ENCODE measurements at regions of chr9 and their contacts with region 1.

Region 1: GRCh38 chr9:113657703-113658544 is 194.4 kb downstream of the RGS3 start:
- DNase-seq: peak; percentile 86
- ATAC-seq: peak; percentile 92
- H3K4me3 Mint-ChIP-seq: no peak overlapping the region
- H3K27ac Mint-ChIP-seq: no peak overlapping the region
- H3K4me1 Mint-ChIP-seq: peaks cover 13% of the 10 kb centered on the region
- H3K27me3 Mint-ChIP-seq: peaks cover 25% of the 10 kb centered on the region

Region 2: DNA sequence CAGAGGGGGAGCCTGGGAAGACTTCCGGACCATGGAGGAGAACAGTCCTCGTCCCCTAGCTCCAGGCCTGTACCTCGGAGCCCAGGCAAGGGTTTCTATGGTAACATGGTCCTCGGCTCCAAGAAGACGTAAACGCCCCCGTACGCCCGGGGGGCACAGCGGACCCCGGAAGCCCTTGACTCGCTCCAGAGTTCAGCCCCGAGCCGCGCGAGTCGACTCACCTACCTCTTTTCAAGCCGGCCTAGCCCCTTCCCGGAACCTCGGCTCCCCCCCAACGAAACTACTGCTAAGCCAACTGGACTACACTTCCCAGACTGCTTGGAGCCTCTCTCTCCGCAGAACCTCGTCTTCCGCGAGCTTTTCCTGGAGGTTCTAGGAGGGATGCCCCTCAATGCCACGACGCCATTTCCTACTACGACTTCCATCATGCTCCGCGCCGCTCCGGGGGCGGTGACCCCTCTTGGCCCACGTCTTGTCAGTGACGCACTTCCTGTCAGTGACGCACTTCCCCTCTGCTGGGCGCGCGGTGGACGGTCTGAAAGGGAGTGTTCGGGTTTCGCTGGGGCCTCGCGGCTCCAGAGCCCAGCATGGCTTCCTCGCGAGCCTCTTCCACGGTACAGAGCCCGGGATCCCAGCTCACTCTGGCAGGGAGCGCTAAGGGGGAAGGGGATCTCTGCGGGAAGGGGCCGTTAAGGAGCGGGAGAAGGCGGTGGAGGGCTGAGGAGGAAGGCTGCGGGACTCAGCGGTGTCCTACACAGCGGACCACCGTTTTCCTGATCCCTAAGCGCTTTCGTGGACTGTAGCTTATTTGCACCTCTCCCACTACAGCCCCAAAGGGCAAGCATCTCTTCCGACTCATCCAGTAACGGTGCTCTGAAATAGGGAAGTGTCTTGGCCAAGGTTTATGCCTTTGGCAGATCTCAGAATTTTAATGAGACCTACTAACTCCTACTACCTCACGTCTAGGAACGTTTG is 382.5 kb before region 1 on chr9 and contains the starts of genes CDC26 and PRPF4:
- CTCF ChIA-PET with region 1: interaction called, 30 read pairs
- DNase-seq: peak; percentile 98
- ATAC-seq: peak; percentile 96
- H3K4me3 Mint-ChIP-seq: no peak within 1 kb of the TSS
- H3K27ac Mint-ChIP-seq: no peak within 1 kb of the TSS
- H3K4me1 Mint-ChIP-seq: peaks cover 32% of the 10 kb centered on the region
- H3K27me3 Mint-ChIP-seq: no peaks in the 10 kb centered on the region
- total RNA-seq, gene CDC26: 25.6 to 33.6 TPM
- total RNA-seq, gene PRPF4: 34.0 to 43.4 TPM

Region 3: DNA sequence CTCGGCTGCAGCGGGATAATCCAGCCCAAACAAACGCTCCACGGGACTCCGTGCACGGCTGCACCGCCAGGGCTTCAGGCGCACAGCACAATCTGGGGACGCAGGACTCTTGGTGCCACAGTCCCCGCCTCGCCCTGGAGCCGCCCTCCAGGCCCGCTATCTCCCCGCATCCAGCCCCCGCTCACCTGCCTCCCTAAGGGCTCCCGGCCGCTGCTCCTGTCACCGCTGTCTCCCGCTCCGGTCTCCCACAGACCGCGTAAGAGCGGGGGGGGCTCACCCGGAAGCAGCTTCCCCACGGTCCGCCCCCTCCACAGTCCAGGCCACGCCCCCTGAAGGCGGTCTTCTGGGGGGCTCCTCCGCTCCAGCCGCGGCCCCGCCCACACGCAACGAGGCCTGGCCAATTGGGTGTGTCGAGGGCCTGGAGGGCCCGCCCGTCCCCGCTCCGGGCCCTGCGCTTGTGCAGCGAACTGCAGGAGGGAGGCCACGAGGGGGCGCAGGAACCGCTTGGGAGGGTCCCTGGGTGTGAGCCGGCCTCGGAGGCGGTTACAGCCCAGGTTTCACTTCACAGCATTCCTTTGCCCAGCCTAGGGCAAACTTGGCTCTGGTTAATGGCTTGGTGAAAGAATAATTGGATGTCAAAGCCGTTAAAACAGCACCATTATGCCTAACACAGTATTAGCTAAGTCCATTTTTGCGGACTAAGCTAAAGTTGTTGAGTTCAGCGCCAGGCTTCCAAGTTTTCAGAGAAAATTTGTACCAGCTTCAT is 256.7 kb before region 1 on chr9 and contains the start of gene ALAD:
- CTCF ChIA-PET with region 1: interaction called, 26 read pairs
- DNase-seq: peak; percentile 99
- ATAC-seq: peak; percentile 100
- H3K4me3 Mint-ChIP-seq: peak within 1 kb of the TSS; percentile 91
- H3K27ac Mint-ChIP-seq: peak within 1 kb of the TSS; percentile 86
- H3K4me1 Mint-ChIP-seq: peaks cover 21% of the 10 kb centered on the region
- H3K27me3 Mint-ChIP-seq: no peaks in the 10 kb centered on the region
- total RNA-seq, gene ALAD: 27.5 to 29.0 TPM

Region 4: GRCh38 chr9:113446323-113446740 is 211.6 kb before region 1 on chr9:
- CTCF ChIA-PET with region 1: interaction called, 151 read pairs
- DNase-seq: no peak
- ATAC-seq: no peak
- H3K4me3 Mint-ChIP-seq: no peak overlapping the region
- H3K27ac Mint-ChIP-seq: no peak overlapping the region
- H3K4me1 Mint-ChIP-seq: peaks cover 2% of the 10 kb centered on the region
- H3K27me3 Mint-ChIP-seq: no peaks in the 10 kb centered on the region

Region 5: GRCh38 chr9:113523421-113524236 is 134.3 kb before region 1 on chr9:
- CTCF ChIA-PET with region 1: interaction called, 14 read pairs
- DNase-seq: peak; percentile 74
- ATAC-seq: peak; percentile 47
- H3K4me3 Mint-ChIP-seq: peak overlapping the region; percentile 38
- H3K27ac Mint-ChIP-seq: peak overlapping the region; percentile 65
- H3K4me1 Mint-ChIP-seq: peaks cover 66% of the 10 kb centered on the region
- H3K27me3 Mint-ChIP-seq: no peaks in the 10 kb centered on the region

Region 6: DNA sequence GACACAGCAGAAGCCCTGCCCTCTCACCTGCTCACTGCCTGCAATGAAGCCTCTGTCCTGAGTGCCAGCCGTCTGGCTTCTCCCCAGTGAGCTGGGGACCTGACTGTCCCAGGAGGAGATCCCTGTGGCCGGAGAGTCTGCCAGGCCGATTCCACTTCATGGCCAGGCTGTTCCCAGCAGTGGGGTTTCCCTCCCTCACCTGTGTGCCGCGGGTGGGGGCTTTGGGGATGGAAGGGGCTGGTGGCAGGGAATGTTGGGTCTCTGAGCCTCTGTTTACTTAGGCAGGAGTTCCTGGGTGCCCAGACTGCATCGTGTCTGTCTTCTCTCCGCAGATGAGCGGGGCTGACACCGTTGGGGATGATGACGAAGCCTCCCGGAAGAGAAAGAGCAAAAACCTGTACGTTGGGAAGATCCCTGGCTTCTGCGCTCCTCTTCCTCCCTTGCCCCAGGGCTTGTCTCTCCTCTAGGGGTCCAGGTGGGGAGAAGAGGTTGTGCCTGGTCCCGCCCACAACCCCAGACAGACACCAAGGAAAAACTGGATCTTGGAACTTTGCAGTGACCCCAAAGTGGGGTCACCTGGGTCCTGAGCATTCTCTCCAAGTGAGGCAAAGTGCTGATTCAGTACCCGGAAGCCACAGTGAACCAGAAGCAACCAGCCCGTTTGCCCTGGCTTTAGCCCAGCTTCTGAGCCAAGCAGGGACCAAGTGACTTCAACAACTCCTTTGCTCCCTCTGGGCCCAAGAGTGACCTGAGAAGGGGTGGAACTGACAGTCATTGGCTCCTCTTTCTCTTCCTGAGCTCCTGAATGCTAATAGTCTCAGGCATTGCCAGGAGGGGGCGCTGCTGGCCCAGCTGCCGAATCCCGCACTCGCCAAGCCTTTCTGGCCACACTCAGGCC is 66.7 kb before region 1 on chr9:
- CTCF ChIA-PET with region 1: interaction called, 230 read pairs
- DNase-seq: peak; percentile 68
- ATAC-seq: peak; percentile 56
- H3K4me3 Mint-ChIP-seq: no peak overlapping the region
- H3K27ac Mint-ChIP-seq: peak overlapping the region; percentile 2
- H3K4me1 Mint-ChIP-seq: peaks cover 34% of the 10 kb centered on the region
- H3K27me3 Mint-ChIP-seq: no peaks in the 10 kb centered on the region

Region 7: GRCh38 chr9:113957821-113958341 is 300.0 kb after region 1 on chr9:
- CTCF ChIA-PET with region 1: no interaction called
- DNase-seq: no peak
- ATAC-seq: no peak
- H3K4me3 Mint-ChIP-seq: no peak overlapping the region
- H3K27ac Mint-ChIP-seq: no peak overlapping the region
- H3K4me1 Mint-ChIP-seq: no peaks in the 10 kb centered on the region
- H3K27me3 Mint-ChIP-seq: no peaks in the 10 kb centered on the region

Measured in activated CD8-positive, alpha-beta memory T cell treated with anti-CD3 and anti-CD28 coated beads, Interleukin-2, amount 10 ng/mL, durations not matched to agents 7 days and 5 days (primary cell).